ENCODE measurements at regions of chr11 and their contacts with region 1.

Region 1: DNA sequence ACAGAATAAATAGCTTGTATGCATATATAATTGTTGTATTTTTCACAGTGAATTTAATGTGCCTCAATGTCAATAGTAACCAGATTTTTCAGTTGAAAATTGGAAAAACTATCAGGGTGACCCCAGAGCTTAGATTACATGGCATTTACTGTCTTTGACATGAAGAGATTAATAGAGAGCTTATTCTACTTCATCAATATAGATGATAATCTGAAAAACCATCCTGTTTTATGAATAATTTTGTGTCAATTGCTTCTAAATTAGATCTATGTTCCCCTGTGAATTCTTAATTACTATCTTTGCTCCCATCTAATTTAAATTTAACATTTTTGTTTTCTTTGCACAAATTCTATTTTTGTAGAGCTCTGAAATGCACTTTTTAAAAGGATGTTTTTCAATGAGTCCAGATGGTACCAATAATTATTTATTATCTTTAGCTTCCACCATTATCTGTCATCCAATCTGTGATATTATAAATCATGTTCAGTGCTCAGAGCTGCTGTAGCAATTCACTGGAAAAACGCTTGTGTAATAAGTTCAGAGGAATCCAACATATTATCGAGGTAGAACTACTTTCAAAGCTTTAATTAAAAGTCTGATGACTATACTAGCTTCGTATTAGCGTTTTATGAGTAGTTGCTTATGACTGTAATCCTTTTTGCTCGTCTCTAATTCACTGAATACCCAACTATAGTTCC is 291.4 kb downstream of the JRKL start:
- DNase-seq: no peak
- H3K4me3 ChIP-seq: no peak overlapping the region
- H3K27ac ChIP-seq: no peak overlapping the region
- H3K4me1 ChIP-seq: no peaks in the 10 kb centered on the region
- H3K27me3 ChIP-seq: no peaks in the 10 kb centered on the region
- CTCF ChIP-seq: no peak

Region 2: GRCh38 chr11:95175818-95176368 is 1505.3 kb before region 1 on chr11:
- CTCF ChIA-PET with region 1: no interaction called
- POLR2A ChIA-PET with region 1: interaction called, 10 read pairs
- intact Hi-C with region 1: no loop called
- DNase-seq: no peak
- H3K4me3 ChIP-seq: no peak overlapping the region
- H3K27ac ChIP-seq: no peak overlapping the region
- H3K4me1 ChIP-seq: no peaks in the 10 kb centered on the region
- H3K27me3 ChIP-seq: no peaks in the 10 kb centered on the region
- CTCF ChIP-seq: no peak

Region 3: DNA sequence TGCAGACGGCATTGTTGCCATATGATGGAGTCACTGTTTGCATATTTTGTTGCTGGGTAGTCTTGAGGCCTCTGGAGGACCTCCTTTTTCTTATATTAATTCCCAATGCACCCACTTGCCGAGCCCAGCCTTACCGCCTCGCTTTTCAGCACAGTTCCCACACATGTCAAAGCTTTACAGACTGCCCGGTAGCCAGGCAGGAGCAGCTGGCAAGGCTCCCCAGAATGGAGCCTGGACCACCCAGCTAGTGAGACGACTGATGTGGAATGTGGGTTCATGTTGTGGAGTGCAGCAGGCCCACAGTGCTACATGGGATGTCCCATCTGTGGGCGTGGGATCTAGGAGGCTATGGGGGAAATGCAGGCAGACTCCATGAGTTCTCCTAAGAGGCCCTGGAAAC is 657.9 kb before region 1 on chr11:
- CTCF ChIA-PET with region 1: no interaction called
- POLR2A ChIA-PET with region 1: no interaction called
- intact Hi-C with region 1: no loop called
- DNase-seq: no peak
- H3K4me3 ChIP-seq: no peak overlapping the region
- H3K27ac ChIP-seq: no peak overlapping the region
- H3K4me1 ChIP-seq: no peaks in the 10 kb centered on the region
- H3K27me3 ChIP-seq: no peaks in the 10 kb centered on the region
- CTCF ChIP-seq: no peak

Region 4: GRCh38 chr11:96538104-96538503 is 143.1 kb before region 1 on chr11:
- CTCF ChIA-PET with region 1: no interaction called
- POLR2A ChIA-PET with region 1: no interaction called
- intact Hi-C with region 1: no loop called
- DNase-seq: no peak
- H3K4me3 ChIP-seq: no peak overlapping the region
- H3K27ac ChIP-seq: no peak overlapping the region
- H3K4me1 ChIP-seq: no peaks in the 10 kb centered on the region
- H3K27me3 ChIP-seq: no peaks in the 10 kb centered on the region
- CTCF ChIP-seq: no peak